ENCODE measurements at regions of chr16 and their contacts with region 1.

Region 1: GRCh38 chr16:4330277-4330874 is 14.5 kb downstream of the GLIS2 start:
- DNase-seq: peak; percentile 92
- ATAC-seq: peak; percentile 73

Region 2: DNA sequence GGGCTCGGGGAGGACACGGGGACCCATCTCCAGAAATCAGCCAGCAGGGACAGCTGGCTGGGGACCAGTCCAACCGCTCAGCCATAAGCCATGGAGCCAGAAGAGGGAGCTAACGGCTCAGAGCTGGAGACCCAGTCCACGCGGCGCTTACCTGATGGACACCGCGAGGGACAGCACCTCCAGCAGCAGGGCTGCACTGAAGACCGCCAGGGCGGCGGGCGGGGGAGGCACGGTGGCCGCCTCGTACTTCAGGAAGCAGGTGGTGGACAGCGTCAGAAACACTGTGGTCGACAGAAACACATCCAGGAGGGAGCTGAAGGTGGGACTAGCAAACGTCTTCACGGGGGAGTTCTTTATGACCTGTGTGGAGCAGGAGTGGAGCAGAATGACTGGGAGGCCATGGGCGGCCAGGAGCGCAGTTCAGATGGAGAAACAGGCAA is 347.3 kb before region 1 on chr16:
- intact Hi-C with region 1: loop called (anchors 10 kb)
- DNase-seq: peak; percentile 76
- ATAC-seq: peak; percentile 90

Region 3: DNA sequence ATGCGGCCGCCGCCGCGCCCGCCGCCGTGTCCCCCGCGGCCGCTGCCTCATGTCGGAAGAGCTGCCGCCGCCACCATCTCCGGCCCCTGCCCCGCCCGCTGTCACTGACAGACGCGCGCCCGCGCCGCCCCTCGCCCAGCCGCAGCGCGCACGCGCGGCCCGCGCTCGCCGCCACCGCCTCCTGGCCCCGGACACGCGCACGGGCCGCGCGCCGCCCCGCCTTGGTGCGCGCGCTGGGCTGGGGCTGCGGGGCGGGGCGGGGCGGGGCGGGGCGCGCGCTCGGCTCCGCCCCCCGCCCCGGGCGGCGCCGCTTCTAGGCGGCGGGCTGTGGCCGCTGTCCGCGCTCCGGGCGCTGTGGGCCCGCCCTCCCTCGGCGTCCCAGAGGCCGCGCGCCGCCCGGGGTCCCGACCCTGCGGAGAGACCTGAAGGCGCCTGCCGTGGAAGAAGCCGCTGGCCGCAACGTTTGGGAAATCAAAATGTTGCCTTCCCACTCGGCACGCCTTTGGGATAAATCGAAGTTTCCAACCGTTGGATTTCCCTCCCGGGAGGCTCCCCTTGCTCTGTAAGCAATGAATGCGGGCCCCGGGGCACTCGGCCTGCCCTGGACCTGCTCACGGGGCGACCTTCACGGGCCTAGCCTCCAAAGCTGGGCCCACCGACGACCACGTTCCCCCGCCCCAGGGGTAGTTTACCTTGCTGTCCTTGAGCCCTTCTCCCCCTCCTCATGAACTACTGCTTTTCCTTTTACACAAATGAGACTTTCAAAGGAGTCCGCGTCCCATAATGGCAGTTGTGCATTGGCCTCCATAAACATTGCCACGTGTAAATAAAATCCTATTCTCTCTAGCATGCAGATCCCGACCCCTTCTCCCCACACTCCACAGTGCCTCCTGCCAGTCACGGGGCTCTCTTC is 213.8 kb before region 1 on chr16 and contains the start of gene ADCY9:
- intact Hi-C with region 1: loop called (anchors 10 kb)
- DNase-seq: peak; percentile 92
- ATAC-seq: peak; percentile 85
- total RNA-seq, gene ADCY9: 48.2 TPM

Region 4: DNA sequence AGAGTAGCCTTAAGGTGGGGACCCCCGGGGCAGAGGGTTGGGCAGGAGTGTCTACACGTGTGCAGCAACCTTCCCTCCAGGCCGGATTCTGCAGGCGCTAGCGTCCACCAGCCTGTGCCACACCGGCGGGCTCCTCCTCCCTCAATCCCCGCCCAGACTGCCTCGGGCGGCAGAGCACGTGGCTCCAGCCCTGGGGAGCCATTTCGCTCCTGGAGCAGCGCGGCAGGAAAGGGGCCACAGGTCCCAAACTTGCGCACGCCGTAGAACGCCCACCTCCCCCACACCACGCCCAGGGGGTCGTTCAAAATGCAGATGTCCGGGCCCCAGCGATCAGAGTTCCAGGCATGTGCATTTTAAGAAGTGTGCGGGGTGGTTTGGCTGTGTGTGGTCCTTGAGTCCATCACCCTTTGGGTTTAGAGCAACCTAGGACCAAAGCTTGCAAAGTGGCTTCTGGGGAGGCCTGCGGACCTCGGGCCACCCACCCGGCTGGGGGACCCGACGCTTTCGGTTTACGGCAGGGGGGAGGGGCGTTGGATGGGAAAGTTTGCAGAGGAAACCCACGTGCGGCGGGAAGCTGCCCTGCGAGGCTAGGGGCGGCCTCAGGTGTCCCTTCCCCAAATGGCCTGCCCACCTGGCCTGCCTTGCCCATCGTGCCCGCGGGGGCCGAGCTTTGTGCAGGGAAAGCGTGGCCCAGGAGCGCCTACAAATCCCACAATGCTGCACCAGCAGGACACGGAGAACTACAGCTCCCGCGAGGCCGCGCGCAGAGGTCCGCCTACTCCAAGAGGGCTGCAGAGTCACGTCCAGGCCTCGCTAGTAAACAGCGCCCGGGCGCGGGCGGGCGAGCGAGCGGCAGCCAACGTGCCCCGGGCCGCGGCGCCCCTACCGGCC is 59.0 kb before region 1 on chr16:
- intact Hi-C with region 1: loop called (anchors 1 kb)
- DNase-seq: peak; percentile 98
- ATAC-seq: peak; percentile 87

Region 5: DNA sequence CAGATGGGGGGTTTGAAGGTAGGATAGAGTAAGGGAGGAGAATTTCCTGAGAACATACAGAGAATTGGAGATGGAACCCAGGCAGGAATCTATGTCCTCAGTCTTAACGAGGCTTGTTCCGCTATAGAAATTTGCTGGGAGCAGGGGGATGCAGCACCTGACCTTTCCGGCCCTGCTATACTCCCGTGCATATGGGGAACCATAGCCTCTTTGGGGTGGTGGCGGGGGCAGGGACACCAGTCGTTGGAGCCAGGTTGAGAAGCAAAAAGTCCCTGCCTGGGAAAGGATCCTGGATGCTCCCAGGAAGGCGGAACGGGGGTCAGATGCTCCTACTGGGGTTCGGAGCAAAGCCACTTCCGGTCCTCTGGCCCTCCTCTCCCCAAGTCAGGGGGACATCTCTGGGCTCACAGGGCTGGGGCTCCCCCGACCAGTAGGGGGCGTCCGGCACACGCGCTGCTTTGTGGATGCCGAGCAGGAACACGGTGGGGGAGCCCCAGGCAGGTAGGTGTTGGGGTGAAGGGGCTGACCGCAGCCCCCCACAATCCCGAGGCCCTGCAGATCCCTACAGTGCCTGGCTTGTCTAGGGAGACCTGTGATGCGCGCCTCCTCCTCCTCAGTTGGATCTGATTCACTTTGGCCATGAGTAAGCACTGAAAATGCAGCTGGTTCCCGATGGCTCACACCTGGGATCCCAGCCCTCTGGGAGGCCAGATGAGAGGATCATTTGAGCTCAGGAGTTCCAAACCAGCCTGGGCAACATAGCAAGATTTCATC is 42.0 kb before region 1 on chr16:
- intact Hi-C with region 1: loop called (anchors 1 kb)
- DNase-seq: peak; percentile 90
- ATAC-seq: peak; percentile 80

Region 6: GRCh38 chr16:4307215-4308037 is 22.9 kb before region 1 on chr16:
- intact Hi-C with region 1: loop called (anchors 2 kb)
- DNase-seq: peak; percentile 98
- ATAC-seq: peak; percentile 97